Panc1 (cell line): ENCODE measurements at regions of chr7 and their contacts with region 1.

Region 1: GRCh38 chr7:29105752-29106668 is 40.3 kb downstream of the CPVL start:
- DNase-seq: peak; percentile 54
- ATAC-seq: peak; percentile 92
- H3K4me3 ChIP-seq: no peak overlapping the region
- H3K27ac ChIP-seq: no peak overlapping the region
- H3K4me1 ChIP-seq: no peaks in the 10 kb centered on the region
- H3K27me3 ChIP-seq: peaks cover 8% of the 10 kb centered on the region; the same call in 1 of the 2 replicates
- CTCF ChIP-seq: peak; percentile 96

Region 2: DNA sequence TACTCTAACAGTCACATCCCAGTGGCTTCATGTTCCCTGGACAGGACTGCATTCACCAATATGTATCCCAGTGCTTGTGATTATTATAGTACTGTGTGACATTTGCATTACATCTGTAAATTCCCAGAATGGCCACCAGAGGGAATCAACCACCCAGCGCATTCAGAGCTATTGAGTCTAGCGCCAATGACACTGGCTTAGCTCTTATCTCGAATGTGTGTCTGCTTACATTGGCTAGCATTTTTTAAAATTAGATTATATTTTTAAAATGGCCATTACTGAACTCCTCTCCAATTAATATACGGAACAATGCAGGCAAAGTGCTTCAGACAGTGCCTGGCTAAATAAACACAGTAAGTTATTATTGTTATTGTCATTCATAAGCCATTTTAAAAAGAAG is 184.2 kb before region 1 on chr7:
- CTCF ChIA-PET with region 1: interaction called, 39 read pairs
- POLR2A ChIA-PET with region 1: no interaction called
- in situ Hi-C with region 1: no loop called
- intact Hi-C with region 1: loop called (anchors 1 kb)
- DNase-seq: peak; percentile 53
- ATAC-seq: peak; percentile 97
- H3K4me3 ChIP-seq: no peak overlapping the region
- H3K27ac ChIP-seq: no peak overlapping the region
- H3K4me1 ChIP-seq: peaks cover 3% of the 10 kb centered on the region; the same call in 1 of the 2 replicates
- H3K27me3 ChIP-seq: peaks cover 28% of the 10 kb centered on the region
- CTCF ChIP-seq: peak; percentile 89

Region 3: DNA sequence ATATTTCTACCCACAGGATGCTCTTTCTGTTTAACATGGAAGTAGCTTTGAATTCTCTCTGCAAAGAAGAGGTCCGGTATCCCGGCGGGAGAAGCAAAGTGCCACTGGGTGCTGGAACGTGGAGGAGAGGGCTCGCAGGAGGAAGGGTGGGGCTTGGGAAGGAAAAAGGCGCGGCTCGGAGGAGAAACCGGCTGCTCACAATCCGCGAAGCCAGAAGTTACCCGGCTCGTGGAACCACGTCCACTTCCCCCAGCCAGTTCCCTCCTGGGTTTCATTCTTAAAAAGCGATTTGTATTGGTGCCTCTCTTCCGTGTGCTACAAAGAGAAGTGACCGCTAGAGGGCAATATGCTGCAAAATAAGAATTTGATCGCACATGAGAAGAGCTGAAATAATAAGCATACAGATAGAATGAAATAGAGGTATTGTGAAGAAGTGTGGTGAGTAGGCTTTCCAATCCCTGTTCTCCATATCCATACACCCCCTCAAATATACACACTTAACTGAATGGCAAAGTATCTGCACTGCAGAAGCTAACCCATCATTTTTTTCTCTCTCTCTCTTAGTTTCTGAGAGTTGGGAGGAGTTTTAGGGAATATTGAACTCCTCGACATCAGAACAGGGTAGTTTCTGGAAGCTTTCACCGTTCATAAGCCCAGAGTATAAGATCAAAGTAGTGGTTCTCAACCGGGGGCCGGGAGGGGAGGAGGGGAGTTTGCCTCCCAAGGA is 179.0 kb before region 1 on chr7:
- CTCF ChIA-PET with region 1: interaction called, 39 read pairs
- POLR2A ChIA-PET with region 1: no interaction called
- in situ Hi-C with region 1: no loop called
- intact Hi-C with region 1: loop called (anchors 1 kb)
- DNase-seq: peak; percentile 50
- ATAC-seq: peak; percentile 91
- H3K4me3 ChIP-seq: peak overlapping the region; percentile 40 to 58
- H3K27ac ChIP-seq: no peak overlapping the region
- H3K4me1 ChIP-seq: peaks cover 4% of the 10 kb centered on the region; the same call in 1 of the 2 replicates
- H3K27me3 ChIP-seq: peaks cover 26% of the 10 kb centered on the region
- CTCF ChIP-seq: peak; percentile 89

Region 4: DNA sequence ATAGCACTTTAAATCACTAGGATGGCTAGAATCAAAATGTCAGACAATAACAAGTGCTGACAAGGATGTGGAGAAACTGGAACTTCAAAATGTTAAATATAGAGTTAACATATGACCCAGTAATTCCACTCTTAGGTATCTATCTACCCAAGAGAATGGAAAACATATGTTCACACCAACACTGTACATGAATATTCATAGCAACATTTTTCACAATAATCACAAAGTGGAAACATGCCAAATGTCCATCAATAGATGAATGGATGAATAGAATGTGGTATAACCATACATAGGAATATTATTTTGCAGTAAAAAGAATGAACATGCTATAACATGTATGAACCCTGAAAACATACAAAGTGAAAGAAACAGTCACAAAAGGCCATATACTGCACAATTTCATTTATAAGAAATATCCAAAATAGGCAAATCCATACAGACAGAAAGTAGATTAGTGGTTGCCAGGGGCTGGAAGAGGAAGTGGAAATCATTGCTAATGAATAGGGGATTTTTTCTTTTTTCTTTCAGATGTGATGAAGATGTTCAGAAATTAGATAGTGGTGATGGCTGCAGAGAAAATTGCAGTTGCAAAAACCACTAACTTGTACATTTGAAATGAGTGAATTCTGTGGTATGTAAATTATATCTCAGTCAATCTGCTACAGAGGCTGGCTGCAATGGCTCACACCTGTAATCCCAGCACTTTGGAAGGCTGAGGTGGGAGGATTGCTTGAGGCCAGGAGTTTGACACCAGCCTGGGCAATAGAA is 52.7 kb before region 1 on chr7:
- CTCF ChIA-PET with region 1: no interaction called
- POLR2A ChIA-PET with region 1: no interaction called
- in situ Hi-C with region 1: no loop called
- intact Hi-C with region 1: no loop called
- DNase-seq: no peak
- ATAC-seq: no peak
- H3K4me3 ChIP-seq: no peak overlapping the region
- H3K27ac ChIP-seq: no peak overlapping the region
- H3K4me1 ChIP-seq: no peaks in the 10 kb centered on the region
- H3K27me3 ChIP-seq: no peaks in the 10 kb centered on the region
- CTCF ChIP-seq: no peak

Region 5: DNA sequence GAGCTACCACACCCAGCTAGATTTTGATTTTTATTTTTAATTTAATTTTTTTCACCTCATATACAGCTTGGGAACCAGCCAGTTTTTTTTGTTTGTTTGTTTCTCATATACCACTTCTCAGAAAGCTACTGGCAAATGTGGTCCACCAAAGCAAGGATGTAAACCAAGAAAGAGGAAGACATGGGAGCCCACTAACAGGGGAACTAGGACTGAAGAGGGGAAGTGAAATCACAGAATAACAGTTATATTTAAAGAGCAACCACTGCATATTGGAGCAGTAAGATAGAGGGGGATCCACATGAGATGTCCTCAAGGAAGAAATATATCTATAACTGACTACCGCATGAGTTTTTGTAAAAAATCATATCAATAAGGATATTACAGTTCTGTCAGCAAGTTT is 29.8 kb after region 1 on chr7:
- CTCF ChIA-PET with region 1: no interaction called
- POLR2A ChIA-PET with region 1: no interaction called
- in situ Hi-C with region 1: no loop called
- intact Hi-C with region 1: no loop called
- DNase-seq: no peak
- ATAC-seq: no peak
- H3K4me3 ChIP-seq: no peak overlapping the region
- H3K27ac ChIP-seq: no peak overlapping the region
- H3K4me1 ChIP-seq: no peaks in the 10 kb centered on the region
- H3K27me3 ChIP-seq: peaks cover 9% of the 10 kb centered on the region
- CTCF ChIP-seq: no peak